ENCODE measurements at regions of chr4 and their contacts with region 1.

Region 1: DNA sequence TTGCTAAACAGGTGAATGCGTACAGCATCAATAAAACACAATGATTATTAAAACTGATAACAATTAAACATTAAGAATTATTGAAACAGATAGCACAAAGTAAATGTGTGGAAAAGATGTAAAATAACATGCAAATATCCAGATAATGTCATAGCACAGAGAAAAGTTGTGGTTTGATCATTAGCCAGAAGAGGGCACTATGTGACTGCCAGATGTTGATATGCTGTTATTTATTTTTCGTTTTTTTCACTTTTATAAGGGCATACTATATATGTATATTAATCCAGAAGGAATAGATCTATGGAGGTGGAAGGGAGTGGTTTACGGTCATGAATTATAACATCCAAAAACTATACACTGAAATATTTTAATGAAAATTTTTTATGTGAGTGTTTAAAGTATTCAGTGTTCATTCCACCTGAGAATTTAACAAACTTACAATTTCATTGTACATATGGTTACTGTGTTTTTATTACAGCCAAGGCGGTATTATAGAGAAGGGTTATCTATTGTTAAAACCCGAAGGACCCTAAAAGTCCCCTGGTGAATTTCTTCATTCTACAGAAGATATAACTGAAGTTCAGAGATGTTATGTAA is 211.9 kb upstream of the UGT8 start:
- DNase-seq: peak; percentile 56
- H3K4me3 Mint-ChIP-seq: no peak overlapping the region
- H3K27ac Mint-ChIP-seq: no peak overlapping the region
- H3K4me1 Mint-ChIP-seq: no peaks in the 10 kb centered on the region
- H3K27me3 Mint-ChIP-seq: peaks cover 36% of the 10 kb centered on the region
- CTCF ChIP-seq: peak; percentile 70

Region 2: GRCh38 chr4:113106108-113106507 is 1280.6 kb before region 1 on chr4:
- CTCF ChIA-PET with region 1: interaction called, 4 read pairs
- POLR2A ChIA-PET with region 1: no interaction called
- intact Hi-C with region 1: loop called (anchors 1 kb)
- DNase-seq: peak; percentile 32
- H3K4me3 Mint-ChIP-seq: no peak overlapping the region
- H3K27ac Mint-ChIP-seq: no peak overlapping the region
- H3K4me1 Mint-ChIP-seq: no peaks in the 10 kb centered on the region
- H3K27me3 Mint-ChIP-seq: no peaks in the 10 kb centered on the region
- CTCF ChIP-seq: peak; percentile 44

Region 3: GRCh38 chr4:113292371-113293042 is 1094.2 kb before region 1 on chr4:
- CTCF ChIA-PET with region 1: interaction called, 3 read pairs
- POLR2A ChIA-PET with region 1: no interaction called
- intact Hi-C with region 1: loop called (anchors 2 kb)
- DNase-seq: no peak
- H3K4me3 Mint-ChIP-seq: no peak overlapping the region
- H3K27ac Mint-ChIP-seq: no peak overlapping the region
- H3K4me1 Mint-ChIP-seq: no peaks in the 10 kb centered on the region
- H3K27me3 Mint-ChIP-seq: no peaks in the 10 kb centered on the region
- CTCF ChIP-seq: no peak

Region 4: GRCh38 chr4:113781439-113782040 is 605.2 kb before region 1 on chr4:
- CTCF ChIA-PET with region 1: interaction called, 13 read pairs
- POLR2A ChIA-PET with region 1: no interaction called
- intact Hi-C with region 1: no loop called
- DNase-seq: peak; percentile 53
- H3K4me3 Mint-ChIP-seq: no peak overlapping the region
- H3K27ac Mint-ChIP-seq: no peak overlapping the region
- H3K4me1 Mint-ChIP-seq: peaks cover 20% of the 10 kb centered on the region
- H3K27me3 Mint-ChIP-seq: no peaks in the 10 kb centered on the region
- CTCF ChIP-seq: peak; percentile 38

Region 5: DNA sequence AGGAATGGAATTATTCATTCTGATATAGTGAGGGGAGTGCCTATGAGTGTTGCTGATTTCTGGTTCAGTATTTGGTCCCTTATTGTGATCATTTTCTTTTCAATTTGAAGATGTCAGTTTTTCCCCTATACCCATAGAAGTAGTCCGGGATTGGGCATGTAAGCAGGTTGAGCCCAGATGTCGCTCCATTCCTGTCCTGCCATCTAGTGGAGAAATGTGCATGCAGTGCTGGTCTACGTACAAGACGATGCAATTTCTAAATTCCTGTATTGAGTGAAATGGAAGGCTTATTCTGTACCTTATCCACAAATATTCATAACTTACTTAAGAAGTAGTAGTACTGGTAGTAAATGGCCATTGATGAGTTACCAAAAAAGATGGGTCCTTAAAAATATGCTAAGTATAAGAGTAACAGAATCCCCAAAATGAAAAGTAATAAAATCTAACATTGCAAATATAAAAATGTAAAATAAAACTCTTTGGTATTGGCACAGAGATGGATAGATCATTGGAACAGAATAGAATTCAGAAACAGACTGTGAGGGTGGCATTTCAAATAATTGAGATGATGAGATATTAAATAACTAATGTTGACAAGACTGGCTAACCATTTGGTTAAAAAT is 272.8 kb after region 1 on chr4:
- CTCF ChIA-PET with region 1: interaction called, 29 read pairs
- POLR2A ChIA-PET with region 1: no interaction called
- intact Hi-C with region 1: loop called (anchors 1 kb)
- DNase-seq: peak; percentile 82
- H3K4me3 Mint-ChIP-seq: no peak overlapping the region
- H3K27ac Mint-ChIP-seq: no peak overlapping the region
- H3K4me1 Mint-ChIP-seq: no peaks in the 10 kb centered on the region
- H3K27me3 Mint-ChIP-seq: peaks cover 69% of the 10 kb centered on the region
- CTCF ChIP-seq: peak; percentile 82

Region 6: DNA sequence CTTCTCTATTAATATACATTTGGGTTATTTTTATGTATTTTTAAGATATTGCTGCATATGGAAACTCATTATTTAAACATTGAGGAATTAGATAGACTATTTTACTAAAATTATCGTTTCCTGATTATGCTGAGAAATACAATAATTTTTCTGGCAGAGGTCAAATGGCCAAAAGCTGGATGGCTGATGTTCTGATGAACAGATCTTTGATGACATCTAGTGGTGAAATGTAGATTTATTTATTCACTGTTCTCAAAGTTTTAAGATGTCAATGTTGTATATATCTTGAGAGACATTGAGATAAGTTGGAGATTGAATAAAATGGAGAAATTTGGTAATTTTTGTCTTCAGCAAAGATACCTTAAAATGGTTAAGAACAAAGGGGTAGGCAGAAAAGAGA is 308.0 kb after region 1 on chr4:
- CTCF ChIA-PET with region 1: interaction called, 36 read pairs
- POLR2A ChIA-PET with region 1: no interaction called
- intact Hi-C with region 1: loop called (anchors 1 kb)
- DNase-seq: peak; percentile 49
- H3K4me3 Mint-ChIP-seq: no peak overlapping the region
- H3K27ac Mint-ChIP-seq: no peak overlapping the region
- H3K4me1 Mint-ChIP-seq: no peaks in the 10 kb centered on the region
- H3K27me3 Mint-ChIP-seq: peaks cover 25% of the 10 kb centered on the region
- CTCF ChIP-seq: peak; percentile 55